H1 (cell line): ENCODE measurements at regions of chr17 and their contacts with region 1.

Region 1: GRCh38 chr17:8041249-8041928 is 2.5 kb downstream of the ALOX15B start:
- DNase-seq: no peak
- H3K4me3 ChIP-seq: no peak overlapping the region
- H3K27ac ChIP-seq: no peak overlapping the region
- H3K4me1 ChIP-seq: peaks cover 0 to 10% (median 6%) of the 10 kb centered on the region in 4 experiments; a peak in 5 of 7 replicates
- H3K27me3 ChIP-seq: peaks cover 0 to 9% (median 4%) of the 10 kb centered on the region in 4 experiments; a peak in 3 of 7 replicates
- CTCF ChIP-seq: peak in 2 of 3 experiments; percentile 59 to 72; a peak in 3 of 4 replicates
- EP300 ChIP-seq: no peak
- POLR2A ChIP-seq: no peak
- RAD21 ChIP-seq: peak; percentile 86 to 87

Region 2: GRCh38 chr17:7915611-7916382 is 125.6 kb before region 1 on chr17 and contains the start of gene RNF227:
- CTCF ChIA-PET with region 1: interaction called, 21 read pairs
- POLR2A ChIA-PET with region 1: interaction called, 3 read pairs
- DNase-seq: peak in 1 of 2 experiments; percentile 92
- H3K4me3 ChIP-seq: peak within 1 kb of the TSS; percentile 30 to 53 (median 37)
- H3K27ac ChIP-seq: no peak within 1 kb of the TSS
- H3K4me1 ChIP-seq: peaks cover 0 to 6% (median 6%) of the 10 kb centered on the region in 4 experiments; a peak in 5 of 7 replicates
- H3K27me3 ChIP-seq: peaks cover 10 to 30% (median 26%) of the 10 kb centered on the region in 4 experiments
- CTCF ChIP-seq: no peak
- EP300 ChIP-seq: no peak
- POLR2A ChIP-seq: no peak
- RAD21 ChIP-seq: no peak
- total RNA-seq, gene RNF227: 0.63 and 0.77 TPM in 2 replicates

Region 3: DNA sequence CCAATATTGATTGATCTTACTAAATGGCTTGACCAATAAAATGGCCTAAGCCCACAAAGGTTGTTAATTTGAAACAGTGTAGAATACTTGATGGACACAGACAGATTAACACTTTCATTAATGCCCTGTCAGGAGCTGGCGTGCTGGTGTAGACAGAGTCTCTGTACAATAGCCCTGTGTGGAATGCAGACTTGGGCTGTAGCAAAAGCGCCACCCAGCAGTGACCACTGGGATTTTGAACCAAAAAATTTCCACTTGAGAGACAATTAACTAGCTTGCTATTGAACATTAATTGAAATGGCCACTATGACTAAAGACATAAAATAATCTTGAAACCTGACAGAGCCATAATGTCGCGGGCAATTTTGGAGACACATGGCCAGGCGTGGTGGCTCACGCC is 58.7 kb before region 1 on chr17:
- CTCF ChIA-PET with region 1: interaction called, 58 read pairs
- POLR2A ChIA-PET with region 1: interaction called, 4 read pairs
- DNase-seq: no peak
- H3K4me3 ChIP-seq: no peak overlapping the region
- H3K27ac ChIP-seq: no peak overlapping the region
- H3K4me1 ChIP-seq: no peaks in the 10 kb centered on the region
- H3K27me3 ChIP-seq: peaks cover 0 to 3% (median 0%) of the 10 kb centered on the region in 4 experiments; a peak in 1 of 7 replicates
- CTCF ChIP-seq: peak in 2 of 3 experiments; percentile 16 to 21; a peak in 2 of 4 replicates
- EP300 ChIP-seq: no peak
- POLR2A ChIP-seq: no peak
- RAD21 ChIP-seq: peak; percentile 28 to 51

Region 4: GRCh38 chr17:8004899-8005298 is 36.5 kb before region 1 on chr17:
- CTCF ChIA-PET with region 1: interaction called, 13 read pairs
- POLR2A ChIA-PET with region 1: no interaction called
- DNase-seq: no peak
- H3K4me3 ChIP-seq: no peak overlapping the region
- H3K27ac ChIP-seq: no peak overlapping the region
- H3K4me1 ChIP-seq: peaks cover 0 to 9% (median 4%) of the 10 kb centered on the region in 4 experiments; a peak in 5 of 7 replicates
- H3K27me3 ChIP-seq: peaks cover 35 to 53% (median 42%) of the 10 kb centered on the region in 4 experiments
- CTCF ChIP-seq: no peak
- EP300 ChIP-seq: no peak
- POLR2A ChIP-seq: no peak
- RAD21 ChIP-seq: no peak

Region 5: DNA sequence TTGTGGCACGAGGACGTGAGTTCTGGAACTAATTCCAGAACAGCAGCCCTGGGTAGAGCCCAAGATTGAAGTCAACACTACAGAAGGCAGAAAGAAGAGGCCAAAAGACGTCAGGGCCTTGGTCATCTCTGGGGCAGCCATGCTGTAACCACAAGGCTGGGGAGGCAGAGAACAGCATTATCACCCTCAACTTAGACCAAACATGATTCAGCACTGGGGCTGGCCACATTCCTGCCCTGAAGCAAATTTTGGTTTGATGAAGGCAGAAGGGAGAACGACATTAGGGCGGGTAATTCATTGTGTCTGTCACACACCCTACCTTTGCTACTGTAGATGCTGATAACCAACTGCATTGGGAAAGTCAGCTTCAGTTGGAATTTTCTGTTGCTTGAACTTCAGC is 12.3 kb before region 1 on chr17:
- CTCF ChIA-PET with region 1: interaction called, 14 read pairs
- POLR2A ChIA-PET with region 1: interaction called, 3 read pairs
- DNase-seq: no peak
- H3K4me3 ChIP-seq: no peak overlapping the region
- H3K27ac ChIP-seq: no peak overlapping the region
- H3K4me1 ChIP-seq: no peaks in the 10 kb centered on the region
- H3K27me3 ChIP-seq: no peaks in the 10 kb centered on the region; a peak in 2 of 7 replicates
- CTCF ChIP-seq: no peak
- EP300 ChIP-seq: no peak
- POLR2A ChIP-seq: no peak
- RAD21 ChIP-seq: no peak

Region 6: DNA sequence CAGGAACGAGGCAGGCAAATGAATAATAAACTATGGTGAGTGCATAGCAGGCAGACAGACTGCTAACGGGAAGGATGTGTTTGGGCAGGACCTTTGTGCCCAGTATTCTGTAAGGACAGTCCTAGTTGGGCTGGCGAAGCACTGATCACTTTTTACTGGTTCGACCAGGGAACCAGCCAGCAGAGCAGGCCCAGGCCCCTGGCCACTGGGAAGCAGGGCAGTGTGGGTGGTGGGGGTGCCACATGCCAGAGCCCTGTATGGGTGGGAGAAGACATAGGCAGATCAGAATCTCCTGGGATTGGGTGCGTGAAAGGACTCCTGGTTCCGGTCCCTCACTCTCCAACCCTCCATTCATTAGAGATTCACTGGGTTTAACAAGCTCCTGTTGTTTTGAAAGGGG is 125.3 kb after region 1 on chr17:
- CTCF ChIA-PET with region 1: no interaction called
- POLR2A ChIA-PET with region 1: no interaction called
- DNase-seq: no peak
- H3K4me3 ChIP-seq: no peak overlapping the region
- H3K27ac ChIP-seq: no peak overlapping the region
- H3K4me1 ChIP-seq: peaks cover 4 to 20% (median 13%) of the 10 kb centered on the region in 4 experiments
- H3K27me3 ChIP-seq: no peaks in the 10 kb centered on the region
- CTCF ChIP-seq: no peak
- EP300 ChIP-seq: no peak
- POLR2A ChIP-seq: no peak
- RAD21 ChIP-seq: no peak